ENCODE measurements at regions of chr2 and their contacts with region 1.

Region 1: GRCh38 chr2:9753276-9753600 is 90.0 kb upstream of the TAF1B start:
- DNase-seq: peak; percentile 56 to 96
- H3K4me3 ChIP-seq: peak overlapping the region; percentile 71
- H3K27ac ChIP-seq: peak overlapping the region; percentile 99
- H3K4me1 ChIP-seq: peaks cover 35% of the 10 kb centered on the region
- H3K27me3 ChIP-seq: no peaks in the 10 kb centered on the region
- CTCF ChIP-seq: no peak

Region 2: DNA sequence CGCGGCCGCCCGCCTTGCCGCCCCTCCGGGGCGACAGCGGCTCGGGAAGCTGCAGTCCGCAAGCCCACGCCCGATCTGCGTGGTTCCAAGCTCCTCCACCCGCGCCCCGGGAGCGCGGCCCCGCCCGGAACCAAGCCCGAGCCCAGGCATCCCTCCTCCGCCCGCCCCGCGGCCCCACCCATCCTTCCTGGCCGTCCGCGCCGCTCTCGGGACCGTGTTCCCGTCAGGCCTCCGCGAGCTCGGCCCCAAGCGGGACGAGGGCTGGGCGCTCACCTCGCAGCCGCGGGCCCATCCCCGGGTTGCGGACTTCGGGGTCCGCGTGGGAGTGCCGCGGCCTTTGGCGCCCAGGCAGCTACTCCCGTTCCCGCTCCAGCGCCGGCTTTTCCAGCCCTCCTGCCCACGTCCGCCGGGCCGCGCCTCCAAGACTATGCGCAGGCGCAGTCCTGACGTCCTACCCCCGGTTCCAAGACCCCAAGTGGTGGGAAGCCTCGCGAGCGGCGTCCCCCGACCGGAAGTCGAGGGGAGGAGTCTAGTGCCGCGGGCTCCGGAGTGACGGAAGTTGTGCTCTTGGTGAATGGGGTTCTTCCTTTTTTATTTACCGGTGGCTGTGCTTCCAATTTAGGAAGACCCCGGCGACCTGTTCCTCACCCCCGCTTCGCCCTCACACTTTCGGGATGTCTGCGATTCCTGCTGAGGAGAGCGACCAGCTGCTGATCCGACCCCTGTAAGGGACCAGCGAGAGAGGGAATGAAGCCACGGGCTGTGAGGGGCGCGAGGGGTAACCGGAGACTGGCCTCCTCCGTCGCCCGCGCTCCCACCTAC is 329.9 kb before region 1 on chr2 and contains the starts of genes CPSF3 and ITGB1BP1:
- CTCF ChIA-PET with region 1: no interaction called
- POLR2A ChIA-PET with region 1: no interaction called
- intact Hi-C with region 1: loop called (anchors 5 kb)
- DNase-seq: peak; percentile 97 to 98
- H3K4me3 ChIP-seq: peak within 1 kb of the TSS; percentile 80
- H3K27ac ChIP-seq: peak within 1 kb of the TSS; percentile 24
- H3K4me1 ChIP-seq: peaks cover 22% of the 10 kb centered on the region
- H3K27me3 ChIP-seq: no peaks in the 10 kb centered on the region
- CTCF ChIP-seq: no peak
- total RNA-seq, gene CPSF3: 52.0 and 61.5 TPM in 2 replicates
- total RNA-seq, gene ITGB1BP1: 68.1 and 82.5 TPM in 2 replicates

Region 3: DNA sequence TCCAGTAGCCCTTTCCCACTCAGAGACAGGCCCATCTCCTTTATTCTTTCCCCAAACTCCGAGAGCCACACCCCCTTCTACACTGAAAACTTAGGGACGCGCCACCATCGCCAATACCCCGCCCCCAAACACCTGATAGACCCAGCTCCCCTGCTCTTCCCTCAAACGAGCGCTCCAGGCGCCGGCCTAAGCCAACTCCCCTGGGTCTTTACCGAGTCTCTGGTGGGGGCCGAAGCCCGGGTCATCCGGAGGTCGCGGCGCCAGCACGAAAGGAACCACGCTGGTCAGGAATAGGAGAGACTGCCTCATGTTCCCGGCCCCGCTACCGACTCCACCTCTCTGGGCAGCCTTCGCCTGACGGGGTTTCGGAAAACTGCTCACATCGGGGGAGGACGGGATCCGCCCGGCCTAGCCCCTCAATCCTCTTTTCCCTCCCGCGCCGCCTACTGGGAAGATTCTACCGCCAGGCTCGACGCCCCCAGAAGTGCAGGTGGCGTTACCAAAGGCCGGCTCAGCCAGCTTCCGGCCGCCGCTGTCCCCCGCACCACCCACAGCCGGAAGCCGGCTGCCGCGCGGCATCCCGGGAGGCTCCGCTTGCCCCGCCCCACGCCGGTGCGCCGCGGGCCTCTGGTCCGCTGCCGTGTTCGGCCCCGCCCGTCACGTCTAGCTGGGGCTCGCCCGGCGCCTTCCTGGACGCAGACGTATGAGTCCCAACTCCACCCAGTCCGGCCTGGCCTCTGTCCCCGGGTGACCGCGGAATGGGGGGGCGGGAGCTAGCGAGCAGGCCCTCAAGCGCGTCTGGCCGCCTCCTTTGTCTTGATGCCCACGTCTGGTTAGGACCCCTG is 197.7 kb before region 1 on chr2 and contains the start of gene ADAM17:
- CTCF ChIA-PET with region 1: no interaction called
- POLR2A ChIA-PET with region 1: interaction called, 15 read pairs
- intact Hi-C with region 1: loop called (anchors 1 kb)
- DNase-seq: peak; percentile 90 to 96
- H3K4me3 ChIP-seq: peak within 1 kb of the TSS; percentile 83
- H3K27ac ChIP-seq: peak within 1 kb of the TSS; percentile 96
- H3K4me1 ChIP-seq: peaks cover 74% of the 10 kb centered on the region
- H3K27me3 ChIP-seq: no peaks in the 10 kb centered on the region
- CTCF ChIP-seq: peak; percentile 35; the same call in 1 of the 2 replicates
- total RNA-seq, gene ADAM17: 53.5 and 65.0 TPM in 2 replicates

Region 4: GRCh38 chr2:9630749-9631483 is 122.3 kb before region 1 on chr2 and contains the start of gene YWHAQ:
- CTCF ChIA-PET with region 1: no interaction called
- POLR2A ChIA-PET with region 1: interaction called, 3 read pairs
- intact Hi-C with region 1: loop called (anchors 2 kb)
- DNase-seq: peak; percentile 93 to 98
- H3K4me3 ChIP-seq: peak within 1 kb of the TSS; percentile 91
- H3K27ac ChIP-seq: peak within 1 kb of the TSS; percentile 72
- H3K4me1 ChIP-seq: peaks cover 36% of the 10 kb centered on the region
- H3K27me3 ChIP-seq: no peaks in the 10 kb centered on the region
- CTCF ChIP-seq: no peak
- total RNA-seq, gene YWHAQ: 353 and 373 TPM in 2 replicates

Region 5: DNA sequence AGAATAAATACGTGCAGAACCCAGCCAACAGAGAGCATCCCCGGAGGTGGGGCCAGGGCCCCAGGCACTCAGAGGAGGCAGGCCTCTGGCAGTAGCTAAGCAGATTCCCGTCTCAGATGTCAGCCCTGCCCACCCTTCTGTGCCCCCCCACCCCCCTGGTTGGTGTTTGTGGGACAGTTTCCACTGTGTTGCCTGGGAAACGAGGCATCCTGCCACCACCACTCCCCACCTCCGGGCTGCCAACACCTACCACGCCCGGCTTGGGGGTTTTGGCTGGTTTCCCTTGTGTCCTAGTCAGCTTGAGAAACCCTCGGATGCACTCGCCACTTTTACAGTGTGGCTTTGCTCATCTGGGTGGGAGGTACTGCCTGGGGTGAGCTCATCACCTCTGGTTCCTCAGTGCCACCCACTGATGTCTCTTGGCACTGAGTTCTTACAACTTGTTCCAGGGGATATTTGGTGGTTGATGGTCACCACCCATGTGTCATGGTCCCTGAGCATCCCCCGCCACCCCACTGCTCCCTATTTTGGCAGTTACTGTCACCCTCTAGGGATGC is 50.1 kb before region 1 on chr2:
- CTCF ChIA-PET with region 1: no interaction called
- POLR2A ChIA-PET with region 1: no interaction called
- intact Hi-C with region 1: loop called (anchors 1 kb)
- DNase-seq: peak; percentile 91 to 95
- H3K4me3 ChIP-seq: no peak overlapping the region; the same call in 1 of the 2 replicates
- H3K27ac ChIP-seq: peak overlapping the region; percentile 87
- H3K4me1 ChIP-seq: peaks cover 46% of the 10 kb centered on the region
- H3K27me3 ChIP-seq: no peaks in the 10 kb centered on the region
- CTCF ChIP-seq: no peak

Region 6: DNA sequence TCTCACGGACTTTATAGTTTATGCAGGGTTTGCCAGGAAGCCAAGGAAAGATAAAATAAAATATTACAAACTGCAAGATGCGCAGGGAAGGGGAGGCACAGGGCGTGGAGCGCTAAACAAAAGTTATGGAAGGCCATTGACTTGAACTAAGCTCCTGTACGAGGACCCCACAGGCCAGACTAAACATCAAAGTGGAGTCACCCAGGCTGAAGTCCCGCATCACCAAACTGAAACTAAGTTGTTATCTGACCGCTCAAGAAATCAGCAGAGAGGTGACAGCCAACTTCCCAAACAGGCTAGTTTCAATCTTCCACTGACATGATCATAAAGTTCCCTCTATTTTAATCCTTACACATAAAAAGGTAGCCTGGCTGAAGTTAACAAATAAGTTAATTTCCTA is 31.9 kb before region 1 on chr2:
- CTCF ChIA-PET with region 1: no interaction called
- POLR2A ChIA-PET with region 1: no interaction called
- intact Hi-C with region 1: no loop called
- DNase-seq: no peak
- H3K4me3 ChIP-seq: no peak overlapping the region
- H3K27ac ChIP-seq: no peak overlapping the region
- H3K4me1 ChIP-seq: no peaks in the 10 kb centered on the region
- H3K27me3 ChIP-seq: no peaks in the 10 kb centered on the region
- CTCF ChIP-seq: no peak

Region 7: GRCh38 chr2:10057231-10058107 is 304.2 kb after region 1 on chr2:
- CTCF ChIA-PET with region 1: no interaction called
- POLR2A ChIA-PET with region 1: interaction called, 10 read pairs
- intact Hi-C with region 1: no loop called
- DNase-seq: peak; percentile 63 to 76
- H3K4me3 ChIP-seq: peak overlapping the region; percentile 50; the same call in 1 of the 2 replicates
- H3K27ac ChIP-seq: no peak overlapping the region
- H3K4me1 ChIP-seq: peaks cover 10% of the 10 kb centered on the region; the same call in 1 of the 2 replicates
- H3K27me3 ChIP-seq: no peaks in the 10 kb centered on the region
- CTCF ChIP-seq: no peak

Region 8: DNA sequence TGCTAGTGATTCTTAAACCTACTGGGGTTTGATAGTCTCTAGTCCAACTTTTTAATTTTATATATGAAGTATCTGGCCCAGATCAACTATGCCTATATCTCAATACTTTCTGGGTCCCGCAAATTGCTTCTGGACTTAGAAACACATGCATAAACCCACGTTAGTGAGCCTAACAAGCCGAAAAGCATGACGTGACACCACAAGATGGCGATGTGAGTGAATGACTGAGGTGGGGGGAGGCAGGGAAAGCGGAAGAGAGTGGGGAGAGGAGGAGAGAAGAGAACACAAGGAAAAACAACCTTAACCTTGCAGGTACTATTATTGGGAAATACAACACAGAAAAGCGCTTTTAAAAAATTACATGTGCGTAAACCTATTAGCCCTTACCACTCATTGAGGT is 1045.5 kb after region 1 on chr2:
- CTCF ChIA-PET with region 1: no interaction called
- POLR2A ChIA-PET with region 1: no interaction called
- intact Hi-C with region 1: no loop called
- DNase-seq: no peak
- H3K4me3 ChIP-seq: no peak overlapping the region
- H3K27ac ChIP-seq: no peak overlapping the region
- H3K4me1 ChIP-seq: no peaks in the 10 kb centered on the region
- H3K27me3 ChIP-seq: no peaks in the 10 kb centered on the region
- CTCF ChIP-seq: no peak